ENCODE measurements at regions of chr12 and their contacts with region 1.

Region 1: DNA sequence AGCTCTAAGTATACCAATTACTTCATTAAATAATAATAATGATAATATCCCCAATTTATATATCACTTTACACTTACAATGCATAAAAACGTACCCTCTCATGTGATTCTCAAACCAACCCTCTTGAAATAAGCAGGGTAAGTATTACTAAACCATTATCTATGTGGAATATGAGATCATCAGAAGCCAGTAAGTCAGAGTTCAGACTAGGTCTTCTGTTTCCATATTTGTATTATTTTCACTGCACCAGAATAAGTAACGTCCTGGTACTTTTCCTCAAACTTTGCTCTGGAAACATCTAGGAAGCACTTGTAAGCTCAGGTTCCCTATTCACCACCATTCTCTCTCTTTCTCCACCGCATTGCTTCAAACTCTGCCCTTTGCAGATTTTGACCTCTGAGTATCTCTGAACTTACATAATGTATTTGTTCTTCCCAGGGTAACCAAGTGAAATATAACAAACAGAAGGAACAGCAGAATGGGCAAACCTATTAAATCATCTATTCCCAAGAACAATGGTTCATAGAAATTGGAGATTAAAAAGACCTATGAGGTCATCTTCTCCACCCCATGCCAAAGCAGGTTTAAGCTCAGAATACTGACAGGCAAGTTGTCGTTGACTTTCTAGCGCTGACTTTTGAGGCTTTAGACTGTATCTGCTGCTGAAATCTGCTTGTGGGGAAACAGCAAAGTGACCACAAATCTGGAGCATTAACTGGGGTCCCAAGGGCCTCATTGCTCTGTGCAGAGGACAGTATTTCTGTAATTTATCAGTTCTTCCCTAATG is 161.3 kb upstream of the FAR2 start:
- DNase-seq: no peak
- H3K4me3 ChIP-seq: no peak overlapping the region
- H3K27ac ChIP-seq: no peak overlapping the region
- H3K4me1 ChIP-seq: peaks cover 0 to 8% (median 3%) of the 10 kb centered on the region in 4 donors
- H3K27me3 ChIP-seq: no peaks in the 10 kb centered on the region
- CTCF ChIP-seq: no peak

Region 2: GRCh38 chr12:28937196-28937595 is 50.5 kb before region 1 on chr12:
- intact Hi-C with region 1: loop called (anchors 10 kb)
- DNase-seq: no peak
- H3K4me3 ChIP-seq: no peak overlapping the region
- H3K27ac ChIP-seq: no peak overlapping the region
- H3K4me1 ChIP-seq: no peaks in the 10 kb centered on the region
- H3K27me3 ChIP-seq: no peaks in the 10 kb centered on the region
- CTCF ChIP-seq: no peak

Measured in tibial artery (tissue), 4 donors.